Esophagus muscularis mucosa (tissue), 4 donors: ENCODE measurements at regions of chr12 and their contacts with region 1.

Region 1: DNA sequence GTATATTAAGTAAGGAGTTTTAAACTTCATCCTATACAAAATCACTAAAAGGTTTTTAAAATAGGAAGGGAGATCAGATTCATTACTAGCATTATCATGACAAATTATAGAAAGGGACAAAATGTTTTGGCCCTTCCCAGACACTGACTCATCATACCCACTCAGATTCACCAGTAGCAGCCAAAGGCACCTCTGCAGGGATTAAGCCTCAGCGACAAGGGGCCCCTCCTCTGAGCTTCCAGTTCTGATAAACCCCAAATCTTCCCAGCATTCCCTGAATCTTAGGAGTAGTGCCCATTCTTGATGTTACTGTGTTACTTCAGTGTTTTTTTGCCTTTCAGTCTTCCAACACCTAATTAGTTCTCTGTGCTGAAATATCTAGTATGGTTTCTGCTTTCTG is 14.5 kb downstream of the KRAS start:
- DNase-seq: no peak
- H3K4me3 ChIP-seq: no peak overlapping the region
- H3K27ac ChIP-seq: peak overlapping the region; percentile 40 to 73 (median 56)
- H3K4me1 ChIP-seq: peaks cover 0 to 26% (median 22%) of the 10 kb centered on the region in 4 donors
- H3K27me3 ChIP-seq: no peaks in the 10 kb centered on the region
- CTCF ChIP-seq: no peak
- EP300 ChIP-seq: peak; percentile 24
- POLR2A ChIP-seq: no peak

Region 2: GRCh38 chr12:25195056-25195971 is 40.9 kb before region 1 on chr12 and contains the starts of genes DNAI7 and ETFRF1:
- intact Hi-C with region 1: loop called (anchors 5 kb)
- DNase-seq: peak; percentile 99
- H3K4me3 ChIP-seq: peak within 1 kb of the TSS; percentile 65 to 80 (median 72)
- H3K27ac ChIP-seq: peak within 1 kb of the TSS; percentile 92 to 96 (median 92)
- H3K4me1 ChIP-seq: peaks cover 8 to 26% (median 20%) of the 10 kb centered on the region in 4 donors
- H3K27me3 ChIP-seq: no peaks in the 10 kb centered on the region
- CTCF ChIP-seq: peak in 1 of 3 experiments; percentile 7
- EP300 ChIP-seq: no peak
- POLR2A ChIP-seq: no peak
- total RNA-seq, gene DNAI7: 0.26 to 1.3 (median 0.40) TPM in 3 of 4 donors, not detected in the other
- total RNA-seq, gene ETFRF1: 26.4 to 61.9 (median 40.3) TPM